ENCODE measurements at regions of chr10 and their contacts with region 1.

Region 1: GRCh38 chr10:73772280-73773151 is 9.3 kb upstream of the CHCHD1 start:
- DNase-seq: peak; percentile 19
- H3K4me3 ChIP-seq: peak overlapping the region; percentile 79
- CTCF ChIP-seq: no peak

Region 2: GRCh38 chr10:73785221-73785720 is 12.8 kb after region 1 on chr10 and contains the start of gene ZSWIM8:
- CTCF ChIA-PET with region 1: interaction called, 8 read pairs
- POLR2A ChIA-PET with region 1: interaction called, 25 read pairs
- DNase-seq: peak; percentile 79
- H3K4me3 ChIP-seq: peak within 1 kb of the TSS; percentile 89
- CTCF ChIP-seq: no peak